SK-N-SH (cell line): ENCODE measurements at regions of chr15 and their contacts with region 1.

Region 1: DNA sequence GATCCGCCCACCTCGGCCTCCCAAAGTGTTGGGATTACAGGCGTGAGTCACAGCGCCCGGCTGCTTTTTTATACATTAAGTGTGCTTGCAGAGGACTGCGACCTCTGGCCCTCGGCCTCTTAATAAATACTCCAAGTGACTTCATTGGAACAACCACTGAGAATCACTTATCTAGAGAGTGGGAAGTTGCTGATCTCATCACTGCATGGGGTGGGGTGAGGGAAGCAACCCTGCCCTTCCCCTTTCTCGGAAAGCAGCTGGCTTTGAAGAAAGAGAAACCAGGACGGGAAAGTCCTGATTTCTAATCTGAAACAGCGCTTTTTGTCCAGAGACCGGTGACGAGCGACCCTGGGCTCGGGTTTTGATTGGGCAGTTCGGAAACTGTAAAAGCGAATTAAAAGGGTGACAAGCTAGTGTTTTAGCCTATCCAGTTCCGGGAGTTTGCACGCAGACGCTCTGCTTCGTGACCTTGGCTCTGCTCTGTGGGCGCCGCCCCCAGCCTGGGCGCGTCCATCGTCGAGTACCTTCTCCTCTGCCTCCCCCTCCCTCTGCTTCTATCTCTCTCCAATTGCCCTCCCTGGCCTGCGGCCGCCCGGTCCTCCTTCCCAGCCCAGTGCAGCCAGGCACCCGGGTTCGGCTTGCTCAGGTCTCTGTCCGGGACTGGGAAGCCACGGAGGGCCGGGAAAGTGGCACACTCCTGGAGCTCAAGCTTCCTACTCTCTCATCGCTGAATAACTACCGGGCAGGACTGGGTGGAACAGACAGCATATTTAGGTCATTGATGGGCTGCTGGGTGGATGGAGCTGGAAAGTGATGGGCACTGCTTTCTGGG is 7.5 kb upstream of the TRIM69 start:
- DNase-seq: peak; percentile 87
- H3K4me3 ChIP-seq: peak overlapping the region; percentile 73 to 94
- H3K27ac ChIP-seq: peak overlapping the region; percentile 97
- H3K4me1 ChIP-seq: peaks cover 6 to 17% of the 10 kb centered on the region in 2 experiments; a peak in 3 of 4 replicates
- H3K27me3 ChIP-seq: no peaks in the 10 kb centered on the region
- CTCF ChIP-seq: no peak
- EP300 ChIP-seq: peak; percentile 54 to 66; a peak in 3 of 4 replicates
- RAD21 ChIP-seq: peak; percentile 14; the same call in 1 of the 2 replicates

Region 2: GRCh38 chr15:44066316-44066740 is 662.5 kb before region 1 on chr15:
- CTCF ChIA-PET with region 1: no interaction called
- POLR2A ChIA-PET with region 1: no interaction called
- DNase-seq: peak; percentile 8
- H3K4me3 ChIP-seq: no peak overlapping the region
- H3K27ac ChIP-seq: no peak overlapping the region; a peak in 1 of 4 replicates
- H3K4me1 ChIP-seq: no peaks in the 10 kb centered on the region; a peak in 1 of 4 replicates
- H3K27me3 ChIP-seq: no peaks in the 10 kb centered on the region
- CTCF ChIP-seq: peak; percentile 80
- EP300 ChIP-seq: no peak
- RAD21 ChIP-seq: peak; percentile 64

Region 3: DNA sequence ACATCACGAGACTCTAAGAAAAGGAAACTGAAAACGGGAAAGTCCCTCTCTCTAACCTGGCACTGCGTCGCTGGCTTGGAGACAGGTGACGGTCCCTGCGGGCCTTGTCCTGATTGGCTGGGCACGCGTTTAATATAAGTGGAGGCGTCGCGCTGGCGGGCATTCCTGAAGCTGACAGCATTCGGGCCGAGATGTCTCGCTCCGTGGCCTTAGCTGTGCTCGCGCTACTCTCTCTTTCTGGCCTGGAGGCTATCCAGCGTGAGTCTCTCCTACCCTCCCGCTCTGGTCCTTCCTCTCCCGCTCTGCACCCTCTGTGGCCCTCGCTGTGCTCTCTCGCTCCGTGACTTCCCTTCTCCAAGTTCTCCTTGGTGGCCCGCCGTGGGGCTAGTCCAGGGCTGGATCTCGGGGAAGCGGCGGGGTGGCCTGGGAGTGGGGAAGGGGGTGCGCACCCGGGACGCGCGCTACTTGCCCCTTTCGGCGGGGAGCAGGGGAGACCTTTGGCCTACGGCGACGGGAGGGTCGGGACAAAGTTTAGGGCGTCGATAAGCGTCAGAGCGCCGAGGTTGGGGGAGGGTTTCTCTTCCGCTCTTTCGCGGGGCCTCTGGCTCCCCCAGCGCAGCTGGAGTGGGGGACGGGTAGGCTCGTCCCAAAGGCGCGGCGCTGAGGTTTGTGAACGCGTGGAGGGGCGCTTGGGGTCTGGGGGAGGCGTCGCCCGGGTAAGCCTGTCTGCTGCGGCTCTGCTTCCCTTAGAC is 17.3 kb before region 1 on chr15 and contains the start of gene B2M:
- CTCF ChIA-PET with region 1: interaction called, 9 read pairs
- POLR2A ChIA-PET with region 1: interaction called, 19 read pairs
- DNase-seq: peak; percentile 93
- H3K4me3 ChIP-seq: peak within 1 kb of the TSS; percentile 74 to 99
- H3K27ac ChIP-seq: peak within 1 kb of the TSS; percentile 88 to 89
- H3K4me1 ChIP-seq: no peaks in the 10 kb centered on the region; a peak in 1 of 4 replicates
- H3K27me3 ChIP-seq: no peaks in the 10 kb centered on the region
- CTCF ChIP-seq: no peak
- EP300 ChIP-seq: no peak
- RAD21 ChIP-seq: no peak
- polyA plus RNA-seq, gene B2M: 1,193 and 2,153 TPM in 2 replicates

Region 4: DNA sequence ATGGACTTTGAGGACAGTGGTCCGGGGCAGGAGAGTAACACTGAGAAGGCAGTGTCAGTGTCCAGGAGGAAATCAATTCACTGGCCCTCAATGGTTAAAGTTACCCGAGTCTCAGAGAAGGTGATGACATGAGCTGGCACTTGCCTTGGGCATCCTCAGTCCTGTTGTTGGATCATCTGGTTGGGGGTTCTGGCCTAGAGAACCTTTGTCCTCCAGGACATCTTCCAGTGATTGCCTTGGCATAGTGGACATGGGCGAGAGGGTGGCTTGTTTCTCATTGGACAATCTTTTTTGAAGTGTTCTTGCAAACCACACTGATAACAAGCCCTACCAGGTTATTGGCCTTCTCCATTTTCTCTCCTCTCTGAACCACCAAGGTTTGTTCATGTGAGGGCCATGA is 144.3 kb after region 1 on chr15:
- CTCF ChIA-PET with region 1: no interaction called
- POLR2A ChIA-PET with region 1: no interaction called
- DNase-seq: no peak
- H3K4me3 ChIP-seq: no peak overlapping the region
- H3K27ac ChIP-seq: no peak overlapping the region
- H3K4me1 ChIP-seq: no peaks in the 10 kb centered on the region
- H3K27me3 ChIP-seq: no peaks in the 10 kb centered on the region
- CTCF ChIP-seq: no peak
- EP300 ChIP-seq: no peak
- RAD21 ChIP-seq: no peak